ENCODE measurements at regions of chr13 and their contacts with region 1.

Region 1: GRCh38 chr13:67238277-67238859 is 8.2 kb upstream of the PCDH9 start:
- DNase-seq: peak; percentile 46
- H3K4me3 Mint-ChIP-seq: no peak overlapping the region
- H3K27ac Mint-ChIP-seq: no peak overlapping the region
- H3K4me1 Mint-ChIP-seq: peaks cover 5% of the 10 kb centered on the region
- H3K27me3 Mint-ChIP-seq: no peaks in the 10 kb centered on the region
- CTCF ChIP-seq: peak; percentile 53

Region 2: DNA sequence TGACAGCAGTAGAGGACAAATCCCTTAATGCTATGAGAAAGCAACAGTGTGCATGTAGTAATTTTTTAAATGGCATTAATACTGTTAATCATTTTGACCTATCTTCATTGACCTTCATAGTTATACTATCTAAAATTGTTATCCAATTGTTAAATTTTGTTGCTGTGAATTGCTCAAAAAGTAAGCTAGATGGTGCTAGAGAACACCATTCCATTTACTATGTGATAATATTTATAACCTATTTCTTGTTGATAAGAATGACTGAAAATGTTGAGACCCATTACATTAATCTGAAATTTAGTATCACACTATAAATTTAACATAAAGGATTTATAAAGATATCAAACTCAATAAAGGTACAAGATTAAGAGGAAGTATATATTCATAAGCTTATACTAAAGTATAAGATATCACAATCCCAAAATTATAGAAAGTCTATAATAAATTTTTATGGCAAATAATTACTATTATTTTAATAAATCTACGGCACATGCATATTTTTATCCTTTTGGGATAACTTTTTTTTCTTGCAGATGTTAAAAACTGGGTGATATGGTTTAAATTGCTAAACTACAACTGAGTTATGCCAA is 1581.5 kb before region 1 on chr13:
- CTCF ChIA-PET with region 1: interaction called, 9 read pairs
- POLR2A ChIA-PET with region 1: no interaction called
- intact Hi-C with region 1: loop called (anchors 5 kb)
- DNase-seq: peak; percentile 27
- H3K4me3 Mint-ChIP-seq: no peak overlapping the region
- H3K27ac Mint-ChIP-seq: no peak overlapping the region
- H3K4me1 Mint-ChIP-seq: no peaks in the 10 kb centered on the region
- H3K27me3 Mint-ChIP-seq: no peaks in the 10 kb centered on the region
- CTCF ChIP-seq: peak; percentile 69

Region 3: DNA sequence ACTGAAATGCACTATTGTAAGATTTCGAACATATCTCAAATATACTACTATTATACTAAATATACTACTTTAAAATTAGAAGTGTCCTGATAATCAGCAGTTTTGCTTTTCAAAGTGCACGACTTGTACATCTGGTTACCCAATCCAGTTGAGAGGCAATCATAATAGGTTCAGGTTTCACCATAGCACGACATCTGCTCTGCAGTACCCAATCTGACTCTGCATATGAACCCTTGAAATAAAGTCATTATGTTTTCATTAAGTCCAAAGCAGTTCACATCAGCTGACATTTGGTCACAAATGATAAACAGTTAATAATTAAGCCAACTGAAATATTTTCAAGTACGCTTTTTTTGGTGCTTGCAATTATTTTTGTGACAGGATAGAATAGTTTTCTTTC is 98.8 kb before region 1 on chr13:
- CTCF ChIA-PET with region 1: no interaction called
- POLR2A ChIA-PET with region 1: no interaction called
- intact Hi-C with region 1: no loop called
- DNase-seq: no peak
- H3K4me3 Mint-ChIP-seq: no peak overlapping the region
- H3K27ac Mint-ChIP-seq: no peak overlapping the region
- H3K4me1 Mint-ChIP-seq: peaks cover 14% of the 10 kb centered on the region
- H3K27me3 Mint-ChIP-seq: no peaks in the 10 kb centered on the region
- CTCF ChIP-seq: no peak

Measured in MCF 10A (cell line).